CD4-positive, alpha-beta memory T cell (primary cell): ENCODE measurements at regions of chr4 and their contacts with region 1.

Region 1: GRCh38 chr4:112938461-112939058 is 110.9 kb upstream of the ANK2 start:
- DNase-seq: peak in 3 of 5 donors; percentile 1 to 11 (median 5)
- H3K4me3 ChIP-seq: no peak overlapping the region
- H3K4me3 Mint-ChIP-seq: no peak overlapping the region
- H3K27ac ChIP-seq: no peak overlapping the region
- H3K27ac Mint-ChIP-seq: no peak overlapping the region
- H3K4me1 ChIP-seq: no peaks in the 10 kb centered on the region
- H3K4me1 Mint-ChIP-seq: no peaks in the 10 kb centered on the region
- H3K27me3 ChIP-seq: no peaks in the 10 kb centered on the region
- H3K27me3 Mint-ChIP-seq: peaks cover 6 to 10% of the 10 kb centered on the region in 2 donors

Region 2: GRCh38 chr4:111722213-111722720 is 1216.3 kb before region 1 on chr4:
- CTCF ChIA-PET with region 1: no interaction called
- POLR2A ChIA-PET with region 1: no interaction called
- intact Hi-C with region 1: no loop called
- DNase-seq: no peak
- H3K4me3 ChIP-seq: no peak overlapping the region
- H3K4me3 Mint-ChIP-seq: no peak overlapping the region
- H3K27ac ChIP-seq: no peak overlapping the region
- H3K27ac Mint-ChIP-seq: no peak overlapping the region
- H3K4me1 ChIP-seq: no peaks in the 10 kb centered on the region
- H3K4me1 Mint-ChIP-seq: no peaks in the 10 kb centered on the region
- H3K27me3 ChIP-seq: no peaks in the 10 kb centered on the region
- H3K27me3 Mint-ChIP-seq: no peaks in the 10 kb centered on the region

Region 3: GRCh38 chr4:112321776-112322684 is 616.5 kb before region 1 on chr4:
- CTCF ChIA-PET with region 1: no interaction called
- POLR2A ChIA-PET with region 1: no interaction called
- intact Hi-C with region 1: loop called (anchors 5 kb)
- DNase-seq: peak; percentile 71 to 80 (median 73)
- H3K4me3 ChIP-seq: no peak overlapping the region
- H3K4me3 Mint-ChIP-seq: peak overlapping the region in 7 of 8 donors; percentile 33 to 73 (median 51)
- H3K27ac ChIP-seq: no peak overlapping the region
- H3K27ac Mint-ChIP-seq: peak overlapping the region in 2 of 7 donors; percentile 46 to 77
- H3K4me1 ChIP-seq: peaks cover 8% of the 10 kb centered on the region
- H3K4me1 Mint-ChIP-seq: peaks cover 5 to 15% (median 8%) of the 10 kb centered on the region in 4 donors
- H3K27me3 ChIP-seq: no peaks in the 10 kb centered on the region
- H3K27me3 Mint-ChIP-seq: no peaks in the 10 kb centered on the region

Region 4: GRCh38 chr4:112361181-112361791 is 577.3 kb before region 1 on chr4:
- CTCF ChIA-PET with region 1: no interaction called
- POLR2A ChIA-PET with region 1: no interaction called
- intact Hi-C with region 1: no loop called
- DNase-seq: no peak
- H3K4me3 ChIP-seq: no peak overlapping the region
- H3K4me3 Mint-ChIP-seq: no peak overlapping the region
- H3K27ac ChIP-seq: no peak overlapping the region
- H3K27ac Mint-ChIP-seq: no peak overlapping the region
- H3K4me1 ChIP-seq: no peaks in the 10 kb centered on the region
- H3K4me1 Mint-ChIP-seq: no peaks in the 10 kb centered on the region
- H3K27me3 ChIP-seq: no peaks in the 10 kb centered on the region
- H3K27me3 Mint-ChIP-seq: peaks cover 0 to 3% of the 10 kb centered on the region in 2 donors

Region 5: GRCh38 chr4:112714922-112715901 is 223.3 kb before region 1 on chr4:
- CTCF ChIA-PET with region 1: no interaction called
- POLR2A ChIA-PET with region 1: no interaction called
- intact Hi-C with region 1: no loop called
- DNase-seq: no peak
- H3K4me3 ChIP-seq: no peak overlapping the region
- H3K4me3 Mint-ChIP-seq: no peak overlapping the region
- H3K27ac ChIP-seq: no peak overlapping the region
- H3K27ac Mint-ChIP-seq: no peak overlapping the region
- H3K4me1 ChIP-seq: no peaks in the 10 kb centered on the region
- H3K4me1 Mint-ChIP-seq: no peaks in the 10 kb centered on the region
- H3K27me3 ChIP-seq: no peaks in the 10 kb centered on the region
- H3K27me3 Mint-ChIP-seq: peaks cover 11 to 13% of the 10 kb centered on the region in 2 donors

Region 6: DNA sequence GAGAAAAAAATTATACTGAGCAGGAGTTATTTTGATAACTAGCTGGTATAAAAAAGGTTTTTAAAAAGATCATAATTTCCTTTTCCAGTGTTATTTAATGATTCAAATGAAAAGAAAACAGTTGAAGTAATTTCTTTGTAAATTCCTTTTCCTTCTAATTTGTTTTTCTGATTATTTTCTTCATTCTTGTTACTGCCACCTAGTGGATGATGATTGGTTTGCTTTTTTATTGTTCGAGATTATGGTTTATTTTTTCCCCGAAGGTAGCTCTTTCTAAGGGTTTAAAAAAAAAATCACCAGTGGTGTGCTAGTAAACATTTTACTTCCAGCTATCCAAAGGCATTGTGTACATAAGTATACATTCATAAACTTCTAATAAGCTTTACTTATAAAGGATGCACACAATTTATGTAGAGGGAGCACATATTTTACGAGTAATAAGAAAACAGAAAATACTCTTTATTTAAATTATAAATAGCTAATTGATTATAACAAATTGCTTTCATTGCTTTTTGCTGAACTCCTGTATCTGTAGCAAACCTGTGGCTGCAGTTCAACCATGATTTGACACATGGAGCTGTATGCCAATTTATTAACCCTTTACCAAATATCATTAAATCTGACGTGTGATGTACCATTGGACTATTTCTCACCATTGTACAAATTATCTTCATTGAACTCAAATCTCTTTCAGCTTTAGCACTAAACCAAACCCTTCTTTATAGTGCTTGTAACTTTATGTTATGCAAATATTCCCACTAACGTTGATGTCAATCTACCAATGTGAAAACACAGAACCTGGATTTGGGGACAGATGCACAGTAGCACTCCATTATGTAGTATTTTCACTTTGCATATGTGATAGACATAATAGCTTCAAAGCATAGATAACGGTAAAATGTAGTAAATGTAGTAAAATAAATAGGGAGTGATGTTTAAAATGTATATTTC is 13.1 kb after region 1 on chr4:
- CTCF ChIA-PET with region 1: interaction called, 35 read pairs
- POLR2A ChIA-PET with region 1: no interaction called
- intact Hi-C with region 1: no loop called
- DNase-seq: peak in 3 of 5 donors; percentile 3 to 10 (median 3)
- H3K4me3 ChIP-seq: no peak overlapping the region
- H3K4me3 Mint-ChIP-seq: no peak overlapping the region
- H3K27ac ChIP-seq: no peak overlapping the region
- H3K27ac Mint-ChIP-seq: no peak overlapping the region
- H3K4me1 ChIP-seq: no peaks in the 10 kb centered on the region
- H3K4me1 Mint-ChIP-seq: no peaks in the 10 kb centered on the region
- H3K27me3 ChIP-seq: no peaks in the 10 kb centered on the region
- H3K27me3 Mint-ChIP-seq: peaks cover 4 to 6% of the 10 kb centered on the region in 2 donors